ENCODE measurements at regions of chr2 and their contacts with region 1.

Region 1: GRCh38 chr2:18560031-18560796 is at the start of gene RDH14:
- DNase-seq: peak; percentile 96 to 97
- ATAC-seq: peak; percentile 98
- H3K4me3 ChIP-seq: peak within 1 kb of the TSS; percentile 85 to 87
- H3K27ac ChIP-seq: peak within 1 kb of the TSS; percentile 45 to 70
- H3K4me1 ChIP-seq: peaks cover 3 to 7% of the 10 kb centered on the region in 2 donors
- H3K27me3 ChIP-seq: no peaks in the 10 kb centered on the region
- total RNA-seq, gene RDH14: 23.8 to 24.1 TPM

Region 2: GRCh38 chr2:18584608-18584954 is 24.4 kb after region 1 on chr2:
- intact Hi-C with region 1: loop called in 1 of 2 experiments (anchors 1 kb)
- DNase-seq: peak; percentile 42 to 73
- ATAC-seq: no peak
- H3K4me3 ChIP-seq: no peak overlapping the region
- H3K27ac ChIP-seq: no peak overlapping the region
- H3K4me1 ChIP-seq: no peaks in the 10 kb centered on the region
- H3K27me3 ChIP-seq: no peaks in the 10 kb centered on the region